ENCODE measurements at regions of chr2 and their contacts with region 1.

Region 1: DNA sequence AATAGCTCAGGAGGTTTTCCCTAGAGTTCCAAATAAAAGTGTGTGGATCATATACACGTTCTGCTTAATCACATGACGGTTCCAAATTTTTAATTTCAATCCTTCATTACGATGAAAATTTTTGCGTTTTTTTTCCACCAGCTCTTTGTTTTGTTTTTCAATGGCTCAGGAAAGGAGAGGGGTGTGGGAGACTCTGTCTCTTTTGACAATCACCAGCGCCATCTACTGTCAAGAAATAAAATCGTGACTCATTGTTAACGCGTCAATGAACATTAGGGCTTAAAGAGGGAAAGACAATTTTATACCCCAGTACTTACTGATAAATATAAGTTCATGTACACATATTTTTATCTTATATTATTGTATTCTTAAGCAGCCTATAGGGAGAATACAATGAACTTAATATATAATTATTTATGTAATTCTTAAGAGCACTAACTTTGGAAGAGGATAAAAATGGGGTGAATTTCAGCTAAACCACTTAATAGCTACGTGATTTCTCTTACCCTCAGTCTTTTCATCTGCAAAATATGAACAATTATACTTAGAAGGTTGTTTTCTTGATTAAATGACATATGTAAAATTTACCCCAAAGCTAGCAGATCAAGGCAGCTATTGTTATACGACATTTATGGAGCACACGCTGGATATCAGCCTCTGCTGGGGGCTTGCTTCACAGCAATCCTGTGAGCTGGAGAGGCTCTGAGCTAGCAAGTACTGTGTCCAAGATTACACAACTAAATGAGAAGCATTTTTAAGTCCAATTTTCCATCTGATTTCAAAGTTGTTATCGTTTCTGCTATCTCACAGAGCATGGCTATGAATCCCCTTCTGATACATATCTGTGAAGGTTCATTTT is 47.4 kb upstream of the RMDN2 start:
- DNase-seq: peak in 1 of 2 donors; percentile 81
- ATAC-seq: peak; percentile 70 to 82 (median 81)
- H3K4me3 ChIP-seq: no peak overlapping the region
- H3K4me3 Mint-ChIP-seq: no peak overlapping the region
- H3K27ac ChIP-seq: no peak overlapping the region
- H3K27ac Mint-ChIP-seq: no peak overlapping the region
- H3K4me1 ChIP-seq: no peaks in the 10 kb centered on the region
- H3K4me1 Mint-ChIP-seq: no peaks in the 10 kb centered on the region
- H3K27me3 ChIP-seq: peaks cover 4% of the 10 kb centered on the region
- H3K27me3 Mint-ChIP-seq: peaks cover 15 to 22% of the 10 kb centered on the region in 2 donors
- CTCF ChIP-seq: peak; percentile 88

Region 2: DNA sequence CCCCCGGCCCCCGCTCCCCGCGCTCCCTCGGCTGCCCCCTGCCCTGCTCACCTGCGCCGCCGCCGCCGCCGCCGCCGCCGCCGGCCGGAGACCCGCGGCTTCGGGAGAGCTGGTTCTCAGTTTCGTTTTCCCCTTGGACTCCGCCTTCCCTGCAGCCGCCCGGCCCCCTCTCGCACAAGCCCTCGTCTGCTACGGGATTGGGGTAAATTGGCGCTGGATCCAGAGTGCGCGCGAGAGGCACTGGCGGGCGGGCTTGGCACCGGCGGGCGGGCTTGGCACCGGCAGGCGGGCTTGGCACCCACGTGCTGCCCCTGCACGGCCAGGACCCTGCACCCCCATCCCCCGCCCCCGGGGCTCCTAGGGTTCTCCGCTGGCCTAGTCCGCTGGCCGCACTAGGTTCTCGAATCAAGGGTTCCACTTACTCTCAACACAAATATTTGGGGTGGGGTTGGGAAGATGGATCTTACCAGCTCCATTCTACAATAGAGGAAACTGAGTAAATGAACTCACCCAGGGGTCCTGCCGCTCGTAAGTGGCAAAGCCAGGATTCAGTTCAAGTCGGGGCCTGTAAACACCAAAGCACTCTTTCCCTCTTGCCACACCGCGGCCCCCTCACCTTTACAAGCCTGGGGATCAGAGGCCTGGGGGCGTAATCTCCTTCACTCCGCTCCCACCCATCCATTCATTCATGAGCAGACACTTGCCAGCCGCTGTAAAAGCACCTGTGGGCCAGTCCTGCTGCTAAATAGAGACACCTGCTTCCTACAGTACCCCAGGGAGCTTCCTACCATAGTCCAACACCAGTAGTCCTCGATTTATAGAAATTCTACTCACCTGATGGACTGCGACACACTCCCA is 720.6 kb before region 1 on chr2 and contains the start of gene EIF2AK2:
- intact Hi-C with region 1: loop called (anchors 10 kb)
- DNase-seq: peak; percentile 70 to 90
- ATAC-seq: peak; percentile 97
- H3K4me3 ChIP-seq: peak within 1 kb of the TSS; percentile 87
- H3K4me3 Mint-ChIP-seq: peak within 1 kb of the TSS; percentile 94
- H3K27ac ChIP-seq: peak within 1 kb of the TSS; percentile 63
- H3K27ac Mint-ChIP-seq: peak within 1 kb of the TSS; percentile 87 to 89
- H3K4me1 ChIP-seq: peaks cover 19% of the 10 kb centered on the region
- H3K4me1 Mint-ChIP-seq: peaks cover 37 to 39% of the 10 kb centered on the region in 2 donors
- H3K27me3 ChIP-seq: no peaks in the 10 kb centered on the region
- H3K27me3 Mint-ChIP-seq: no peaks in the 10 kb centered on the region
- CTCF ChIP-seq: no peak
- total RNA-seq, gene EIF2AK2: 29.9 to 47.3 (median 43.9) TPM

Region 3: DNA sequence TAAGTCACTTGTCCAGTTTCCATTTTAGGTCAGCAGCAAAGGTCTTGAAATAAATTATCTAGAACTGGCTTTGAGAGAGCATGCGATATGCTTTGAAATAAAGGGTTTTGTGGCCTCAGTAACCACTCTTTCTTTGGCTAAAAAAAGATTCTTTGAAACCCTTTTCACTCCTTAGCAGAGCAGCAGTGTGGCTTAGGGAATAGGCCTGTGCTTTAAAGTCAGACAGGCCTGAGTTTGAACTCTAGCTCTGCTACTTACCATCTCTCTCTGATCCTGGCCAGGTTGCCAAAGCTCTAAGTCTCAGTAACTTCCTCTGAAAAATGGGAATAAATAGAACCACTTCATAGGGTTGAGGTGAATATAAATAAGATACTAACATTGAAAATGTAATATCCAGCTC is 480.5 kb before region 1 on chr2:
- intact Hi-C with region 1: loop called (anchors 1 kb)
- DNase-seq: no peak
- ATAC-seq: no peak
- H3K4me3 ChIP-seq: no peak overlapping the region
- H3K4me3 Mint-ChIP-seq: no peak overlapping the region
- H3K27ac ChIP-seq: no peak overlapping the region
- H3K27ac Mint-ChIP-seq: no peak overlapping the region
- H3K4me1 ChIP-seq: no peaks in the 10 kb centered on the region
- H3K4me1 Mint-ChIP-seq: peaks cover 0 to 5% of the 10 kb centered on the region in 2 donors
- H3K27me3 ChIP-seq: no peaks in the 10 kb centered on the region
- H3K27me3 Mint-ChIP-seq: no peaks in the 10 kb centered on the region
- CTCF ChIP-seq: no peak

Region 4: DNA sequence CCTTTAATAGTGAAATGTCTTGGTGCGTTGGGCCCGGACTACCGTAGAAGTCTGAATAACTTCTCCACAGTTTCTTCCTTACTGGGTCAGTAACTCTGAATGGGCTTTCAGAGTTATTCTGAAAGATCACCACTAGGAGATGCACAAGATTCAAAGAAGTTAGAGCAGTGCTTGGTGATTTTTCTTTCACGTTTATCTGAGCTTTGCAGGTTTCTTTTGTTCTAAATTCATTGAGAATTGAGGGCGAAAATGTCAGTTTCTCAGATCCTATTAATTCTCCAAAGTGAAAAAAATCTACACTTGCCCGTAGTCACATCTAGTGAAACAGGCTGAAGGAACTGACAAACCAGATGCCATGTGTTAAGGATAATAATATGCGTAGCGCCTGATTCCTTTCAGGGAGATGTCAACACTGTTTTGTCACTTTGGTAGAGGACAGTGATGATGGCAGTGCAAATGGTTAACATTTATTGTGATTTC is 463.2 kb before region 1 on chr2:
- intact Hi-C with region 1: loop called (anchors 5 kb)
- DNase-seq: peak in 1 of 2 donors; percentile 73
- ATAC-seq: peak; percentile 74 to 84 (median 79)
- H3K4me3 ChIP-seq: no peak overlapping the region
- H3K4me3 Mint-ChIP-seq: no peak overlapping the region
- H3K27ac ChIP-seq: no peak overlapping the region
- H3K27ac Mint-ChIP-seq: no peak overlapping the region
- H3K4me1 ChIP-seq: no peaks in the 10 kb centered on the region
- H3K4me1 Mint-ChIP-seq: peaks cover 8 to 13% of the 10 kb centered on the region in 2 donors
- H3K27me3 ChIP-seq: no peaks in the 10 kb centered on the region
- H3K27me3 Mint-ChIP-seq: peaks cover 0 to 2% of the 10 kb centered on the region in 2 donors
- CTCF ChIP-seq: peak; percentile 89

Region 5: GRCh38 chr2:37832590-37833197 is 45.0 kb before region 1 on chr2:
- intact Hi-C with region 1: loop called (anchors 2 kb)
- DNase-seq: peak; percentile 72 to 88
- ATAC-seq: peak; percentile 83 to 96 (median 94)
- H3K4me3 ChIP-seq: no peak overlapping the region
- H3K4me3 Mint-ChIP-seq: no peak overlapping the region
- H3K27ac ChIP-seq: no peak overlapping the region
- H3K27ac Mint-ChIP-seq: no peak overlapping the region
- H3K4me1 ChIP-seq: peaks cover 9% of the 10 kb centered on the region
- H3K4me1 Mint-ChIP-seq: peaks cover 12 to 21% of the 10 kb centered on the region in 2 donors
- H3K27me3 ChIP-seq: no peaks in the 10 kb centered on the region
- H3K27me3 Mint-ChIP-seq: no peaks in the 10 kb centered on the region
- CTCF ChIP-seq: peak; percentile 92